Calu3 (cell line): ENCODE measurements at regions of chr1 and their contacts with region 1.

Region 1: GRCh38 chr1:88800382-88801051 is 90.8 kb downstream of the GTF2B start:
- DNase-seq: peak; percentile 44
- H3K4me3 Mint-ChIP-seq: no peak overlapping the region
- H3K27ac Mint-ChIP-seq: no peak overlapping the region
- H3K4me1 Mint-ChIP-seq: peaks cover 35% of the 10 kb centered on the region
- H3K27me3 Mint-ChIP-seq: no peaks in the 10 kb centered on the region
- CTCF ChIP-seq: peak; percentile 60

Region 2: DNA sequence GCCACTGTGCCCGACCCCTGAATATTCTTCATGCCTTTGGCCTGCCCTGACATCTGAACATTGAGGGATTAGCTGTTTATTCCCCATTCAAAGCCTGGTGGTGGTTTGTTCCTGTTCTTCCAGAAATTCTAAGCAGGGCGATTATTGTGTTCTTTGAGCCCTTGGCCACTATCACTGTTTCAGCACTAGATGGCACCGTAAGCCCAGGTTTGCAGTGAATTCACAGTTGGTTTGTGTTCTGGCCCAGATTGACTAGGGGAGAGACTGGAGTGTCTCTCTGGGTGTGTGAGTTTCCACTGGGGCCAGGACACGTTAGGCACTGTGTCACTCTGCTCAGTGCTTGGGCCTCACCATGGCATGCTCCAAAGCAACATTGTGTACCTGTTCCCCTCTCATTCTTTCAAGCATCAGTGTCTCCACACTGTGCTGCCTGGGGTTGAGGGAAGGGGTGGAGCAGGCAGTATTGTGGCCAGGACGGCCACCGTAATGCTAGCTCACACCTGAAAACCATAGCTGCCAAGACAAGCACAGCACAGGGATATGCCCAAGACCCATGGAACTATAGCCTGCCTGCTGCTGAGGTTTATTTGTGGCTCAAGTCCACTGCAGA is 63.8 kb before region 1 on chr1:
- CTCF ChIA-PET with region 1: no interaction called
- intact Hi-C with region 1: loop called (anchors 10 kb)
- DNase-seq: peak; percentile 66
- H3K4me3 Mint-ChIP-seq: no peak overlapping the region
- H3K27ac Mint-ChIP-seq: peak overlapping the region; percentile 49
- H3K4me1 Mint-ChIP-seq: peaks cover 45% of the 10 kb centered on the region
- H3K27me3 Mint-ChIP-seq: no peaks in the 10 kb centered on the region
- CTCF ChIP-seq: peak; percentile 84

Region 3: DNA sequence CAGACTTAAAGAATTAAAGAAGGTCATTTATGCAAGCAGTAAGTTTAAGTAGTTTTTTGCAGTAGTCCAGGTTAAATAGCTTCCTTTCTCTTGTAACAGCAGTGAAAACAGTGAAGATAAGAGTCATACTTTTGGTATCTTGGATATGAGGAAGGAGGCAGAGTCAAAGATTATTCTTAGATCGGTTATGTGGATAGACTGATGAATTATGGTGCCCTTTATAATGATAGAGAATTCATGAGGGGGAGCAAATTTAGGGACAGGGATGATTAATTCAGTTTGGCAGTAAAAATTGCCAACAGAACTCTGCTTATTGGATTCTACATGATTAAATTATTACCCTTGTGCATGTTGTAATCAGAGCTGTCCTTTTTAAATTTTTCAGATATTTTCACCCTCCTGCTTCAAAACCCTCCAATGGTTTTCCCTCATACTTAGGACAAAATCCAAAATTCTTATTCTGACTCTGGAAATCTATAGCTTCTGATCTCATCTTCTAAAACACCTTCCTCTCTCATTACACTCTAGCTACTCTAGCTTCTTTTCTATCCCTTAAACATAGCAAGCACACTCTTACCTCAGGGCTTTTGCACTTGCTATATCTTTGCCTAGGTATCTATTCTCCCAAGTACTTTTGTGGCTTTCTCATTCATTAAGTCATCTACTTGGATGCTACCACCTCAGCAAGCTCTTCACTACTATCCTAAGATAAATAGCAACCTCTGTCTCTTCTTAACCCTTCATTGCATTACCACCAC is 36.7 kb before region 1 on chr1:
- CTCF ChIA-PET with region 1: no interaction called
- intact Hi-C with region 1: loop called (anchors 5 kb)
- DNase-seq: no peak
- H3K4me3 Mint-ChIP-seq: peak overlapping the region; percentile 10
- H3K27ac Mint-ChIP-seq: peak overlapping the region; percentile 84
- H3K4me1 Mint-ChIP-seq: peaks cover 48% of the 10 kb centered on the region
- H3K27me3 Mint-ChIP-seq: no peaks in the 10 kb centered on the region
- CTCF ChIP-seq: no peak